Vagina (tissue), 2 donors: ENCODE measurements at regions of chr15 and their contacts with region 1.

Region 1: DNA sequence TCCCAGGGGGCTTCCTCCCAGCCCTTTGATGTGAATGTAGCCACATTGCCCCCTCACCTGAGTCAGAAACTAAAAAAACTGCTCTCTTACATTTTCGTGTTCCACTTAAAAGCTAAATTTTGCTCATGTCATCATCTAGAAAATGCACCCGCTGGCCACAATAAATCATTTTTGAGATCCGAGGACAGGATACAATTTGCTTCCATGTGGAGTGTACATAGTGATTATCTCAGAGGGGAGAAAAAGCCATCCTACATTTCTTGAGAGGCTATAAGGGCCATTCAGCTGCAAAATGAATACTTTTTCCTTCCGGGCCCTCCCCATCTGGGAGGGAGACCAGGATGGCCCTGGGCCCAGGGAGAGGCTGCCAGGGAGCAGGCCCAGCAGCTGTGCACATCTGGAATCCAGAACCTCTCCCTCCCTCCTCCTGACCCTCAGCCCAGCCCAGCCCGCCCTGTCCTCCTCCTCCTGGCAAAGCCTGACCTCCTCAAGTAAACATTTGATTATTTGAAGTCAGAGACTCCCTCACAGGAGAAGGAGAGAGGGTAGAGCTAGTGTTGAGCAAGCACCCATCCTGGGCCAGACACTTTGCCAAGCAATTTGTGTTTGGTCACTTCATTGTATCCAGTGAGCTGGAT is 59.1 kb downstream of the CORO2B start:
- DNase-seq: peak in 1 of 2 donors; percentile 94
- H3K4me3 ChIP-seq: no peak overlapping the region
- H3K27ac ChIP-seq: peak overlapping the region; percentile 59
- H3K4me1 ChIP-seq: peaks cover 68% of the 10 kb centered on the region
- H3K27me3 ChIP-seq: no peaks in the 10 kb centered on the region
- CTCF ChIP-seq: no peak
- POLR2A ChIP-seq: no peak

Region 2: GRCh38 chr15:68316061-68316804 is 321.7 kb before region 1 on chr15:
- intact Hi-C with region 1: no loop called
- DNase-seq: peak in 1 of 2 donors; percentile 84
- H3K4me3 ChIP-seq: no peak overlapping the region
- H3K27ac ChIP-seq: no peak overlapping the region
- H3K4me1 ChIP-seq: no peaks in the 10 kb centered on the region
- H3K27me3 ChIP-seq: no peaks in the 10 kb centered on the region
- CTCF ChIP-seq: no peak
- POLR2A ChIP-seq: no peak

Region 3: DNA sequence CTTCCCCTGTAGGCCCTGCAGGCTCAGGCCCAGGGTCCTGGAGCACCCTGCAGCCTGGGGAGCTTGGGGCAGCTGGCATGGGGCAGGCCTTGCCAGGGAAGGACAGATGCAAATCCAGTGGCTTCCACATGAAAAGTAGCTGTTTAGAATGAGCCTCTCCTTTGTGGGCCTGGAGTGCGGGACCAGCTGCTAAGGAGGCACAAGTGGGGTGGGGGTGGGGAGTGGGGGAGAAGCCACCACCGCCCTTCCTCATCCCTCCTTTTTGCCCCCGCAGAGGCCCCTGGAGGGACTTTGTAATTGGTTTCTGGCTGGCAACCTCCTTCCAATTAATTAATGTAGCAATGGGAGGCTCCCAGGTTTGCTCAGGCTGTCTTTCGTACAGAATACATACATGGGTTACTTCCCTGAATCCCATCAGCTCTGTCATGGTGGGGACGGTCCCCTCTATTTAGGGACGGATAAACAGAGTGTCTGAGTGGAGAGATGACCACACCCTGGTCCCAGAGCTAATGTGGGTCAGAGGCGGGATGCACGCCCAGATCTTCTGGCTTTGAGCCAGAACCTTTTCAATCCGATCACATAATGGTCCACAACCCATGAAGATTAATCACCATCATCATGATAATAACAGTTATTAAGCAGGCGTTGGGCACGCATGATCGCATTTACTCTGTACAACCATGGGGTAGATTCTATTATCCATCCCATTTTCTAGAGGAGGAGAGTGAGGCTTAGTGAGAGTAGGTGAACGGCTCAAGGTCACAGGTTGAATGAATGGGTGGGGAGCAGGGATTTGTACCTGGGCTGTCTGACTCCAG is 52.9 kb before region 1 on chr15:
- intact Hi-C with region 1: loop called (anchors 5 kb)
- DNase-seq: no peak
- H3K4me3 ChIP-seq: no peak overlapping the region
- H3K27ac ChIP-seq: no peak overlapping the region
- H3K4me1 ChIP-seq: peaks cover 6% of the 10 kb centered on the region
- H3K27me3 ChIP-seq: no peaks in the 10 kb centered on the region
- CTCF ChIP-seq: no peak
- POLR2A ChIP-seq: no peak

Region 4: DNA sequence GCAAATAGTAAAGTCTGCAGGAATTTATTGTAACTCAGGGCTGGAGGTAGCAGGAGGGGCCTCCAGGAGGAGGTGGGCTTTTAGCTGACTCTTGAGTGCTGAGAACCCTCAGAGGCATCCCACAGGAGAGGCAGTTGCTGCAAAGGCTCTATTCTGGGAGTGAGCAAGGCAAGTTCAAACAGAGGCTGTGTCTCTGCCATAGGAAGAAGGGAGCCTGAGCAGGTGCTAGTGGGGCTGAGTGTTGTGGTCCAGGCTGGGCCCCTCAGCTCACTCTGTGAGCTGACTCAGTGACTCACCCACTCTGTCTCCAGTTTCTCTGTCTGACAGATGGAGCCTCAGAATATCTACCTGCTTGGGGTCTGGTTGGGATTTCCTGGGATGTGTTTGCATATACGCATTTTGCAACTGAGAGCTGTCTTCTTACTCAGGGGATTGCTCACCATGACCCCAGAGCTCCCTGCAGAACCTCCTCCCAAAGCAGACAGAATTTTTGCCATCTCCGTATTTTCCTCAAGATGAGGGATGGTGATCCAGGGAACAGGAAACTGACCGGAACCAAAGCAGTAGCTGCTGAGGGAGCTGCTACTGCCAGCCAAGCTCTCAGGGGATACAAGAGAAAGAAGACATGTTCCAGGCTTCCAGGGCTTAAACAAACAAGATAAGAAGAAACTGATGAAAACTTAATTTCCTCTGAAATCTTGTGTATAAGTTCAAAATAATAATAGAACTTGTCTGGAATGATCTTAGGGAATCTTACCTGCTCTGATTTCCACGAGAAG is 363.0 kb after region 1 on chr15:
- intact Hi-C with region 1: no loop called
- DNase-seq: peak; percentile 37 to 55
- H3K4me3 ChIP-seq: no peak overlapping the region
- H3K27ac ChIP-seq: no peak overlapping the region
- H3K4me1 ChIP-seq: no peaks in the 10 kb centered on the region
- H3K27me3 ChIP-seq: no peaks in the 10 kb centered on the region
- CTCF ChIP-seq: no peak
- POLR2A ChIP-seq: no peak